Activated CD4-positive, alpha-beta T cell treated with anti-CD3 and anti-CD28 coated beads, Interleukin-2, amount 10 ng/mL, durations not matched to agents 24 days and 14 days (primary cell): ENCODE measurements at regions of chr1 and their contacts with region 1.

Region 1: GRCh38 chr1:243525085-243525487 is 269.2 kb downstream of the SDCCAG8 start:
- DNase-seq: no peak
- H3K4me3 Mint-ChIP-seq: no peak overlapping the region
- H3K27ac Mint-ChIP-seq: no peak overlapping the region
- H3K4me1 Mint-ChIP-seq: peaks cover 6% of the 10 kb centered on the region
- H3K27me3 Mint-ChIP-seq: no peaks in the 10 kb centered on the region

Region 2: DNA sequence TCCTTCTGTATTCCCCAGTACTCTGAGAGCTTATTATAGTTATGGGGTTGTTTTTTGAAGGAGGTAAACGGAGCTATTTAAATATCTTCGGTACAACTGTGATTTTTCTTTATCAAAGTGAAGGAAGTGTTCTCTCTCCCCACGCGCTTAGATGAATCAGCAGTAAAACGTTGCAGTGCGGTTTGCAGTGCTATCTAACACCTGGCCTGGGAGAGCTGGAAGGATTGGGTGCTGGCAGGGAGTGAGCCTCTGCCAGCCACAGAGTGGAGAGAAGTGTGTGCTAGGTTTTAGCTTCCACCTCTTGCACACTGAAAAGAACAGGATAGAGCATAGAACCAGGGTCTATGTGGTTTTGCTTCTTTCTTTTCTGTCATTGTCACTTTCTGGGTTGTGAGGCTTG is 103.3 kb before region 1 on chr1:
- intact Hi-C with region 1: no loop called
- DNase-seq: peak; percentile 89
- H3K4me3 Mint-ChIP-seq: peak overlapping the region; percentile 70
- H3K27ac Mint-ChIP-seq: peak overlapping the region; percentile 55
- H3K4me1 Mint-ChIP-seq: peaks cover 38% of the 10 kb centered on the region
- H3K27me3 Mint-ChIP-seq: no peaks in the 10 kb centered on the region

Region 3: DNA sequence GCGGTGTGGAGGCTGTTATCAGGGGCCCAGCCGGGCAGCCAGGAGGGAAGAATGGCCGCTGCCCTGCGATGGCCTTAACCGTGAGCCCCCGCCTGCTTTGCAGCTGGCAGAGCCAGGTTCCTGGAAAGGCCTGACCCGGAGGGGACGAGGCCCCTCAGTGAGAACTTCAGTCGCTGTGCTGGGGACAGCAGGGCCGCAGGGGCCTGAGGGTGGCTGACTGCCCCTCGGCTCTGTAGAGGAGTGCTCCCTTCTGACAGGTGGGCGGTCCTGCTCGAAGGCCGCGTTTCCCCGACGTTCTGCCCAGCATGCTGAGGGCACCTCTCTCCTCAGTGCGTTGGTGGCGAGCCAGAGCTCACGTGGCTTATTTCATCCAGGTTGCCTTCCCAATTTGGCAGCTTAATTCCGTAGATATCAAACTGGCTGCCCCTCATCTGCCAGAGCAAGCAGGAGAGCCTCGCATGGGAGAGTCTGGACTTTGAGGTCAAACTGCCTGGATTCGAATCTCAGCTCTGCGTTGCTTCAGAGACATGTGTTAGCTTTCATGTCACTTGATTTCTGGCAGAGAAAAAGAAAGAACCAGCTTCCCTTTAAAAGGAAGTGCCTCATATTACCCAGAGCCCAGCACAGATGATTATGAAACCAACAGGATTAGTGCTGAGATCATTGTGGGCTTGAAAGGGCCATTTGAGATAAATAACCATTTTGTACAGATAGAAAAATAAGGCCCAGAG is 29.5 kb before region 1 on chr1:
- intact Hi-C with region 1: no loop called
- DNase-seq: no peak
- H3K4me3 Mint-ChIP-seq: no peak overlapping the region
- H3K27ac Mint-ChIP-seq: no peak overlapping the region
- H3K4me1 Mint-ChIP-seq: peaks cover 5% of the 10 kb centered on the region
- H3K27me3 Mint-ChIP-seq: no peaks in the 10 kb centered on the region

Region 4: DNA sequence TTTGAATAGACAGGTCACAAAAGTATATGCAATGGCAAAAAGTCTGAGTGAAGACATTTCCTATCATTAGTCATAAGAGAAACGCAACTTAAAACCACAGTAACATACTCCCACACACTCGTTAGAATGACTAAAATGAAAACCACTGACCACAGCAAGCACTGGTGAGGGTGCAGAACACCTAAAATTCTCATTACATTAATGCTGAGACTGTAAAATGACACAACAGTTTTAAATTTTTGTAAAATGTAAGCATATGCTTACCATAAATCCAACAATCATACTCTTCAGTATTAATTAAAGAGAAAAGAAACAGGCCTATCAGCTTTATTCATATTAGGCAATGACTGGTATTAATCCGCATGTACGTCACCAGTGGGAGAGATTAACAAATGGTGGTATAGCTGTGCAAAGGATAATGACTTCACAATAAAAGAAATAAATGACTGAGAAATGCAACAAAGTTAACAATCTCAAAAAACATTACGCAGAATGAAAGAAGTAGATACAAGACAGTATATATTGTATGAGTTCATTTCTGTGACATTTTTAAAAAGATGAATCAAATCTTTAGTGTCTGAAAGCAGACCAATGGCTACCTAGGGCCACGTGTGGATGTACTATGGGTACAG is 71.5 kb after region 1 on chr1:
- intact Hi-C with region 1: loop called (anchors 5 kb)
- DNase-seq: peak; percentile 81
- H3K4me3 Mint-ChIP-seq: peak overlapping the region; percentile 43
- H3K27ac Mint-ChIP-seq: peak overlapping the region; percentile 87
- H3K4me1 Mint-ChIP-seq: peaks cover 24% of the 10 kb centered on the region
- H3K27me3 Mint-ChIP-seq: no peaks in the 10 kb centered on the region